Heart right ventricle (tissue), 16 donors: ENCODE measurements at regions of chr2 and their contacts with region 1.

Region 1: DNA sequence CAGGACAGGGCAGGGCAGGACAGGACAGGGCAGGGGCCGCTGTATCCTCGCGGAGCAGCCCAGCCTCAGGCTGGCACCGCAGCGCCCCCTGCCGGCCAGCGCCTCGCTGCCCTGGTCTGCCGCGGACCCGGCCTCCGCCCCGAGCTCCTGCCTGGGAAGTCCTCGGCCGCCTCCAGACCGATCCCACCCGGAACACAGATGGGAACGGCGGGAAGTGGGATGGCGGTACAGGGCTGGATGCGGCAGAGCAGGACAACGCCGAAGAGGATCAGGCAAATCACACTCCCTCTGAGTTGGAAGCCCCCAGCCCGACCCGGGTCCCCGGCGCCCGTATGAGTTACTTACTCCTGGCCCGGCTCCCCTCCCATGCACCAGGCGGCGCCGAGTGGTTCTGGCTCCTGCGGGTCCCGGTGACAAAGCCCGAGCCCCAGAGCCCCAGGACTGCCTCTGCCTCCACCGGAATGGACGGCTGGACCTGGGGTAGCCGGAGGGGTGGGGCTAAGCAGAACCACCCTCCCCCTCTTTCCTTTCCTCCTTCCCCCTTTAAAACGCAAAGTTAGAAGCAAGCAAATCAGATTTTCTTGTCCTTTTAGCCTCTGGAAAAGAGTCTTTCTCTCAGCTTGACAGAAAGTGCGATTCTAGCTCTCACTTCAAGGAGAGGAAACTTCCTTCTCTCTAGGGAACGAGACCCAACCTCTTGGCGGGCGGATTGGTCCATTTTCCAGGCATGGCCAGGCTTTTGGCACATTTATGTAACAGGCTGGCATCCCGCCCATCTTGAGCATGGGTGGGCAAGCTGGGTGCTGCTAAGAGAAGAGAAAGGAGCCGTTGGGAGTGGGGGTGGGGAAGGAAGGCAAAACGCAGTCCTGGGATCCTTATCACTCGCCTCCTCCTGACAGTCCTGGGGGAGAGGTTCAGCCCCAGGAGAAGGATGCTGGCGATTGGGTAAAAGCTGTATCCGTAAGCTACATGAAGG is at the start of gene TP53I3:
- DNase-seq: peak; percentile 87 to 92
- ATAC-seq: peak; percentile 96 to 99 (median 97)
- H3K4me3 ChIP-seq: peak within 1 kb of the TSS; percentile 50 to 79 (median 66)
- H3K27ac ChIP-seq: peak within 1 kb of the TSS; percentile 55 to 98 (median 90)
- H3K4me1 ChIP-seq: peaks cover 4 to 23% (median 18%) of the 10 kb centered on the region in 9 donors
- H3K27me3 ChIP-seq: no peaks in the 10 kb centered on the region
- CTCF ChIP-seq: peak; percentile 95 to 99 (median 98)
- total RNA-seq, gene TP53I3: 8.7 to 18.3 (median 12.3) TPM

Region 2: DNA sequence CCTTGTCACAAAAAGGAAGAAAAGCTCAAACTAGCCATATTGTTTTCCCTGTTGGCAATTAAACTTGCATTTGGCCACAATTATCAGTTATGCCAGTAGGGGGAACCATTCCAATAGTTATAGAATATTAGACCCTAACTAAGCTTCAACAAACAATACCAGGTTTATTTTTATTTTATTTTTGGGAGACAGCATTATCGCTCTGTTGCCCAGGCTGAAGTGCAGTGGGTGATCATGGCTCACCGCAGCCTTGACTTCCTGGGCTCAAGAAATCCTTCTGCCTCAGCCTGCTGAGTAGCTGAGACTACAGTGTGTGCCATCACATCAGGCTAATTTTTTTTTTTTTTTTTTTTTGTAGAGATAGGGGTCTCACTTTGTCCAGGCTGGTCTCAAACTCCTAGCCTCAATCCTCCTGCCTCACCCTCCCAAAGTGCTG is 259.9 kb before region 1 on chr2:
- intact Hi-C with region 1: loop called in 9 of 10 experiments (anchors 2 to 10 kb)
- DNase-seq: peak in 1 of 2 donors; percentile 18
- ATAC-seq: peak in 4 of 8 donors; percentile 16 to 52 (median 28)
- H3K4me3 ChIP-seq: no peak overlapping the region
- H3K27ac ChIP-seq: no peak overlapping the region
- H3K4me1 ChIP-seq: peaks cover 0 to 7% (median 0%) of the 10 kb centered on the region in 9 donors
- H3K27me3 ChIP-seq: no peaks in the 10 kb centered on the region
- CTCF ChIP-seq: peak; percentile 25 to 81 (median 70)

Region 3: DNA sequence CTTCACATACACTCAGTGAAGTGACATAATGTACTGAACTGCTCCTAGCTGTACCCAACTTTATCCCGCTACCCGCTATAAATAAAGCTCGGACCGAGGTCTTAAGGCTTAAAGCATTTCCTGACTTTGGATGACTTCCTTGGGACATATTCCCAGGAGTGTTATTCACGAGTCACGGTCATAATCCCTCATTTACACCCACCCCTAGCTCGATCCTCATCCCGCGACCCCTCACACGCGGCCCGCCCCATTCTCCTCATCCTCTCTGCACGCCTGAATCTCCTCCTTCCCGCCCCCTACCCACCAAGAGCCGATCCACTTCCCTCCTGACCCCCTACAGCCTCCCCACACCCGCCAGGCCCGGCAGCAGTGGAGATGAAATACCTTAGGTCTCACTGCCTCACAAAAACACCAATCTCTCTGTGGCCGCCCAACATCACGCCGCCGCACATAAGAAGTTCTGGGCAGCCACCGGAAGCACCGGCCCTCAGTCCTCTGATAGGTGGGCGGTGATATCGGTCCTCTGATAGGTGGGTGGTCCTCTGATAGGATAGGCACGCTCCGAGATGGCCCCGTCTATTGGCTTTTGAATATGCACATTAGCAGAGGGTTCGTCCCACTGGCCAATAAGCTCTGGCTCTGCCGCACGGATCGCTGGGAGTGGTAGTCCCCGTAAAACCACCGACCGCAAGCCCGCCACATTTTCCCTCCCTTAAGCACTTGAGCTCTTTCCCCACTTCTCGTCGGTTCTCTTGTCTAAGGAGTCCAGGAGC is 37.6 kb before region 1 on chr2 and contains the start of gene WDCP:
- intact Hi-C with region 1: loop called in 1 of 10 experiments (anchors 5 kb)
- DNase-seq: peak; percentile 89 to 97
- ATAC-seq: peak; percentile 99 to 100 (median 99)
- H3K4me3 ChIP-seq: peak within 1 kb of the TSS; percentile 39 to 87 (median 74)
- H3K27ac ChIP-seq: peak within 1 kb of the TSS in 9 of 10 donors; percentile 47 to 87 (median 71)
- H3K4me1 ChIP-seq: peaks cover 0 to 38% (median 29%) of the 10 kb centered on the region in 9 donors
- H3K27me3 ChIP-seq: peaks cover 0 to 22% (median 0%) of the 10 kb centered on the region in 7 donors
- CTCF ChIP-seq: no peak
- total RNA-seq, gene WDCP: 4.8 to 10.1 (median 6.2) TPM

Region 4: DNA sequence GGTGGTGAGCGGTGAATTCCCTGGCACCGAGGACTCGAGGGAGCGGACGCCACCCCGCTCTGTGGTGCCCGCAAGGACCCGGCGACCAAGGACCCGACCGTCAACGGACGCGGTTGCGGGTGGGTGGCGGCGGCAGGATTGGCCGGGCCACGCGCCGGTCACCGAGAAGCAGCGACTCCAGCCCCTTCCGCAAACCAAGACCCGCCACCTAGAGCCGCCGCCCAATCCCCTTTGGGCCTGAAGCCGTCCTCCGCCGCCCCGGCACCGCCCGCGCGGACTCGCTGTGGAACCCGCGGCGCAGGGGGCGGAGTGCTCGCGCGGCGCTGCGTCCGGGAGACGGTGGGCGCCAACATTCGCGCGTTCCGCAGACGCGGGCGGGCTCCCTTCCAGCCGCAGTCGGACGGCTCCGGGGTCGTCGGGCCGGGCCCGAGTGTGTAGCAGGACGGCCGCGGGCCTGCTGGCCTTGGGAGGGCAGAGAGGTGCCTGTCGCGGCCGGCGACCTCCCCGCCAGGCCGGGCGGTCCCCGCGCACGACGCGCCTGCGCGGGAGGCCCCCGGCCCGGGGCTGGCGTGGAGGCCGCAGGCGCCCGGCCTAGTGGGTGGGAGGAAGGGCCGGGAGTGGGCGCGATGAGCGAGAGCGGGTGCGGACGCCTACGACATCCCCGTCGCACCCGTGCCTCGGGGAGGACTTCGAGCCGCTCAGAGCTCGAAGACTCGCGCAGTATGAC is 38.7 kb after region 1 on chr2 and contains the starts of genes FAM228B and PFN4:
- intact Hi-C with region 1: loop called in 4 of 10 experiments (anchors 1 to 5 kb)
- DNase-seq: peak; percentile 92
- ATAC-seq: peak; percentile 97 to 99 (median 98)
- H3K4me3 ChIP-seq: peak within 1 kb of the TSS; percentile 64 to 82 (median 76)
- H3K27ac ChIP-seq: peak within 1 kb of the TSS; percentile 86 to 98 (median 94)
- H3K4me1 ChIP-seq: peaks cover 0 to 24% (median 14%) of the 10 kb centered on the region in 9 donors
- H3K27me3 ChIP-seq: no peaks in the 10 kb centered on the region
- CTCF ChIP-seq: peak in 1 of 9 donors; percentile 14
- total RNA-seq, gene FAM228B: 21.6 to 35.4 (median 27.3) TPM
- total RNA-seq, gene PFN4: 0.35 to 1.6 (median 0.78) TPM in 8 of 10 donors, not detected in the others